ENCODE measurements at regions of chr1 and their contacts with region 1.

Region 1: GRCh38 chr1:221376286-221376685 is 365.6 kb downstream of the DUSP10 start:
- DNase-seq: no peak
- H3K4me3 ChIP-seq: no peak overlapping the region
- H3K27me3 ChIP-seq: no peaks in the 10 kb centered on the region
- CTCF ChIP-seq: no peak

Region 2: DNA sequence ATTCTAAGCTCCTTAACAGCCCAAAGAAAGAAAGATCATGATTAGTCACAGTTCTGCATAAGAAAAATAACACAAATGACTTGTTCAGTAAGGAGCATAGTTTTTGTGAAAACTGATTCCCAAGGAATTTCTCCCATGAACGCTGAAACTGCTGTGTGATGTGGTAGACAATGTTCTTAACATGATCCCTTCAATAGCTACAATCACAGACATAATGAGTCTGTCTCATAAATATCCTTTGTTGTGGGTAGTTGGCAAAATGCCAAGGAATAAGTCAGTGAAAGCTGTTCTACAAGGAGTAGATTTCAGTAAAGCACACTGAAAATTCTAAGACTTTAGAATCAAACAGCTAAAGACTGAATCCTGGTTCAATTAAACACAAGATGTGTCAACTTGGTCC is 92.3 kb before region 1 on chr1:
- CTCF ChIA-PET with region 1: no interaction called
- POLR2A ChIA-PET with region 1: interaction called, 15 read pairs
- DNase-seq: no peak
- H3K4me3 ChIP-seq: no peak overlapping the region
- H3K27me3 ChIP-seq: no peaks in the 10 kb centered on the region
- CTCF ChIP-seq: no peak